Activated T-helper 2 cell treated with anti-CD3 and anti-CD28 coated beads, Interferon-gamma antibody, Interleukin-2, Interleukin-4, amounts not matched to agents 10 μg/mL and 5 μg/mL and 100 μg/mL, durations not matched to agents 14 hours and 24 hours and 36 hours (primary cell): ENCODE measurements at regions of chr2 and their contacts with region 1.

Region 1: DNA sequence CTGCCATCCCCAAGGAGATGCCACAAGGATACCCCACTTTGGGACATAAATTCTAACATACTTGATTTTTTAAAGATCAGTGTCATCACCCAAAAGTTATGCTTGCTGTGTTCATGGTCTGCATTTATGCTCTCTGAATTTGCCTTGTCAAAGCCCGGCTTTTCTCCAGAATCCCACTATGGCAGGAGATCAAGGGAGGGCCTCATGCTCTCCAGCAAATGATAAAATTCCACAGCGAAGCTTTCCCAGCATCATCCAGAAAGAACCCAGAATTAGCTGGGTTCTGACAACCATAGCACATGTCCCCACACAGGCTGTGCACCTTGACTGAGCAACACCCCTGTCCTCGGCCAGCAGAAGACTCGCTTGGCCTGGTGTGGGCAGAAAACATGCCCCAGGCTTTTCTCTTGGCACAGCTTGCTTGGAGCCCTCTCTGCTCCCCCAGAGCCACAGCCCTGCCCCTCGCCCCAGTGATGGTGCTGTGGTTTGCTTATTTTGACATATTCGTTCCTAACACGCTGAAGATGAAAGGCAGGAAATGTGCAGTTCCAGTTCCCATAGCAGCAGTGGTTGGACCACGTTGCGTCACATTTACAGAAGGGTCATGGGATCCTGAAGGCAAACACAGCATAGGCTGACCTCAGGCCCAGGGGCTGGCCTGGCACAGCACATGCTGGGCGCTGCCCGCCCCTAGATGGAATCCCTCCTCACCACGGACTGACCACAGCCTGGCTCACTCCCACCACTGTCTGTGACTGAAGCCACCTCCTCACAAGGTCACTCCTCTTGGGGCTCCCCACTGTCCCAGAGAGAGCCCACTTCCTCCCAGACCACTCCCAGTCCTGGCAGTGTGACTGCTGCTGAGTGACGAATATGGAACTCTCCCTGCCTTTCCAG is 14.1 kb upstream of the CHRNA1 start:
- DNase-seq: peak; percentile 76
- H3K4me3 Mint-ChIP-seq: no peak overlapping the region
- H3K27ac Mint-ChIP-seq: peak overlapping the region; percentile 87
- H3K4me1 Mint-ChIP-seq: peaks cover 39% of the 10 kb centered on the region
- H3K27me3 Mint-ChIP-seq: no peaks in the 10 kb centered on the region

Region 2: DNA sequence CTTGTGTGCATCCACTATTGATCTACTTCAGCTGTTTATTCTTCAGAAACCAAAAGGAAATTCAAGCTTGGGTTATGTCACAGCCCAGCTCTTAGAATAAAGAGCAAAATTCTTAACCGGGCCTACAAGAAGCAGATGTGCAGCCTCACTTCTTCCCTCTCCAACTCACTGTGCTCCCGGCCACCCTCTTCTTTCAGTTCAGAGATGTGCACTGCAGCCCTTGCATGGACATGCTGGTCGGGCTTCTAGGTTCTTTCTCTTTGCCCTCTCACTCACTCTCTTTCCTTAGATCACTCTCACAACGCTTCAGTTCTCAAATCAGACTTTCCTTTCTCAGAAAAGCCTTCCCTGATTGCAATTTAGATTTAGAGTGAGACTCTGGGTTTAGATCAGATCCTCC is 122.7 kb after region 1 on chr2:
- intact Hi-C with region 1: loop called (anchors 5 kb)
- DNase-seq: no peak
- H3K4me3 Mint-ChIP-seq: peak overlapping the region; percentile 24
- H3K27ac Mint-ChIP-seq: peak overlapping the region; percentile 53
- H3K4me1 Mint-ChIP-seq: peaks cover 20% of the 10 kb centered on the region
- H3K27me3 Mint-ChIP-seq: peaks cover 1% of the 10 kb centered on the region

Region 3: GRCh38 chr2:175251425-175252041 is 473.2 kb after region 1 on chr2:
- intact Hi-C with region 1: no loop called
- DNase-seq: no peak
- H3K4me3 Mint-ChIP-seq: no peak overlapping the region
- H3K27ac Mint-ChIP-seq: no peak overlapping the region
- H3K4me1 Mint-ChIP-seq: peaks cover 13% of the 10 kb centered on the region
- H3K27me3 Mint-ChIP-seq: peaks cover 2% of the 10 kb centered on the region